B cell (primary cell): ENCODE measurements at regions of chr3 and their contacts with region 1.

Region 1: GRCh38 chr3:114056130-114057010 is at the starts of genes CCDC191 and QTRT2:
- DNase-seq: peak; percentile 99
- ATAC-seq: peak; percentile 95
- H3K4me3 ChIP-seq: peak within 1 kb of the TSS; percentile 71 to 100 (median 74)
- H3K4me3 Mint-ChIP-seq: peak within 1 kb of the TSS; percentile 95
- H3K27ac ChIP-seq: peak within 1 kb of the TSS; percentile 82 to 93
- H3K27ac Mint-ChIP-seq: peak within 1 kb of the TSS; percentile 96
- H3K4me1 ChIP-seq: peaks cover 36 to 46% of the 10 kb centered on the region in 2 donors
- H3K4me1 Mint-ChIP-seq: peaks cover 59% of the 10 kb centered on the region
- H3K27me3 ChIP-seq: no peaks in the 10 kb centered on the region
- H3K27me3 Mint-ChIP-seq: no peaks in the 10 kb centered on the region
- CTCF ChIP-seq: no peak
- total RNA-seq, gene CCDC191: 47.9 and 52.5 TPM in 2 replicates
- total RNA-seq, gene QTRT2: 59.5 and 61.8 TPM in 2 replicates

Region 2: GRCh38 chr3:113696658-113697499 is 359.5 kb before region 1 on chr3:
- CTCF ChIA-PET with region 1: no interaction called
- POLR2A ChIA-PET with region 1: no interaction called
- intact Hi-C with region 1: loop called (anchors 1 kb)
- DNase-seq: peak; percentile 100
- ATAC-seq: peak; percentile 87
- H3K4me3 ChIP-seq: peak overlapping the region; percentile 73 to 100 (median 90)
- H3K4me3 Mint-ChIP-seq: no peak overlapping the region
- H3K27ac ChIP-seq: peak overlapping the region; percentile 81 to 90
- H3K27ac Mint-ChIP-seq: no peak overlapping the region
- H3K4me1 ChIP-seq: peaks cover 39 to 40% of the 10 kb centered on the region in 2 donors
- H3K4me1 Mint-ChIP-seq: peaks cover 27% of the 10 kb centered on the region
- H3K27me3 ChIP-seq: no peaks in the 10 kb centered on the region
- H3K27me3 Mint-ChIP-seq: no peaks in the 10 kb centered on the region
- CTCF ChIP-seq: no peak

Region 3: GRCh38 chr3:113844622-113845222 is 211.6 kb before region 1 on chr3:
- CTCF ChIA-PET with region 1: interaction called, 10 read pairs
- POLR2A ChIA-PET with region 1: no interaction called
- intact Hi-C with region 1: no loop called
- DNase-seq: peak; percentile 53
- ATAC-seq: peak; percentile 36
- H3K4me3 ChIP-seq: no peak overlapping the region
- H3K4me3 Mint-ChIP-seq: no peak overlapping the region
- H3K27ac ChIP-seq: no peak overlapping the region
- H3K27ac Mint-ChIP-seq: no peak overlapping the region
- H3K4me1 ChIP-seq: peaks cover 0 to under 1% of the 10 kb centered on the region in 2 donors
- H3K4me1 Mint-ChIP-seq: peaks cover 12% of the 10 kb centered on the region
- H3K27me3 ChIP-seq: no peaks in the 10 kb centered on the region
- H3K27me3 Mint-ChIP-seq: no peaks in the 10 kb centered on the region
- CTCF ChIP-seq: peak; percentile 75

Region 4: DNA sequence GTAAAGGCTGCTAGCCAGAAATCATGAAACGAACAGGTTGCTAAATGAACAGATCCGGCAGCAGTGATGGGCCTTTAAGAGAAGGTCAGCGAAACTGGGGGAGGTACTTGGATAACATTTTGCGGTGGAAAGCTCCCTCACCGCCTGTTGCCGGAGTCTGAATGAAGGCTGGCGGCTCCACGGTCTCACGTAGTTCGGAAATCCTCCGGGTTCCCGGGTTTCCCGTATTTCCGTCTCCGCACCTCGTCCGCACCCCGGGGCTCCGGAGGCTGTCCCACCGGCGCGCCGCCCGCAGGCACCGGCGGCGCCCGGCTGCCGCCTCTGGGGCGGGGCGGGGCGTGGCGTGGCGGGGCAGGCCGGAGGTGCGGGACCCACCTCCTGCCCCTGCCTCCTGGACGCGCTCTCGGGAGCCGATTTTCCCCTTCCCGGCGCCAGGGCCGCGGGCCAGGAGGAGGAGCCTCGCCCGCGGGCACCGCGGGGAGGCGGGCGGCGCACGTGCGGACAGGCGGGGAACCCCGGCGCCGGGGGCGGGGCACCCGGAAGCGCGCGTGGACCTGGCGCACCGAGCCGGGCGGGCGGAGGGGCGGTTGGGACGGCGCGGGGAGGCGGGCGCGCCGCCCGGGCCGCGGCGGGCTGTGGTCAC is 108.9 kb before region 1 on chr3 and contains the start of gene ZDHHC23:
- CTCF ChIA-PET with region 1: no interaction called
- POLR2A ChIA-PET with region 1: no interaction called
- intact Hi-C with region 1: loop called (anchors 1 kb)
- DNase-seq: peak; percentile 88
- ATAC-seq: peak; percentile 84
- H3K4me3 ChIP-seq: peak within 1 kb of the TSS; percentile 47 to 89 (median 84)
- H3K4me3 Mint-ChIP-seq: peak within 1 kb of the TSS; percentile 87
- H3K27ac ChIP-seq: peak within 1 kb of the TSS; percentile 48 to 74
- H3K27ac Mint-ChIP-seq: peak within 1 kb of the TSS; percentile 89
- H3K4me1 ChIP-seq: peaks cover 12 to 14% of the 10 kb centered on the region in 2 donors
- H3K4me1 Mint-ChIP-seq: peaks cover 18% of the 10 kb centered on the region
- H3K27me3 ChIP-seq: no peaks in the 10 kb centered on the region
- H3K27me3 Mint-ChIP-seq: no peaks in the 10 kb centered on the region
- CTCF ChIP-seq: no peak
- total RNA-seq, gene ZDHHC23: 72.6 and 75.1 TPM in 2 replicates

Region 5: GRCh38 chr3:114005481-114005880 is 50.9 kb before region 1 on chr3:
- CTCF ChIA-PET with region 1: interaction called, 8 read pairs
- POLR2A ChIA-PET with region 1: interaction called, 10 read pairs
- intact Hi-C with region 1: loop called (anchors 1 kb)
- DNase-seq: peak; percentile 91
- ATAC-seq: peak; percentile 95
- H3K4me3 ChIP-seq: peak overlapping the region in 4 of 5 experiments; percentile 31 to 43 (median 38)
- H3K4me3 Mint-ChIP-seq: peak overlapping the region; percentile 80
- H3K27ac ChIP-seq: peak overlapping the region; percentile 93 to 94
- H3K27ac Mint-ChIP-seq: peak overlapping the region; percentile 98
- H3K4me1 ChIP-seq: peaks cover 34 to 45% of the 10 kb centered on the region in 2 donors
- H3K4me1 Mint-ChIP-seq: peaks cover 55% of the 10 kb centered on the region
- H3K27me3 ChIP-seq: no peaks in the 10 kb centered on the region
- H3K27me3 Mint-ChIP-seq: no peaks in the 10 kb centered on the region
- CTCF ChIP-seq: peak; percentile 38

Region 6: GRCh38 chr3:114067804-114068203 is 11.4 kb after region 1 on chr3:
- CTCF ChIA-PET with region 1: no interaction called
- POLR2A ChIA-PET with region 1: no interaction called
- intact Hi-C with region 1: no loop called
- DNase-seq: no peak
- ATAC-seq: no peak
- H3K4me3 ChIP-seq: no peak overlapping the region
- H3K4me3 Mint-ChIP-seq: no peak overlapping the region
- H3K27ac ChIP-seq: no peak overlapping the region
- H3K27ac Mint-ChIP-seq: no peak overlapping the region
- H3K4me1 ChIP-seq: no peaks in the 10 kb centered on the region
- H3K4me1 Mint-ChIP-seq: peaks cover 5% of the 10 kb centered on the region
- H3K27me3 ChIP-seq: no peaks in the 10 kb centered on the region
- H3K27me3 Mint-ChIP-seq: no peaks in the 10 kb centered on the region
- CTCF ChIP-seq: no peak

Region 7: DNA sequence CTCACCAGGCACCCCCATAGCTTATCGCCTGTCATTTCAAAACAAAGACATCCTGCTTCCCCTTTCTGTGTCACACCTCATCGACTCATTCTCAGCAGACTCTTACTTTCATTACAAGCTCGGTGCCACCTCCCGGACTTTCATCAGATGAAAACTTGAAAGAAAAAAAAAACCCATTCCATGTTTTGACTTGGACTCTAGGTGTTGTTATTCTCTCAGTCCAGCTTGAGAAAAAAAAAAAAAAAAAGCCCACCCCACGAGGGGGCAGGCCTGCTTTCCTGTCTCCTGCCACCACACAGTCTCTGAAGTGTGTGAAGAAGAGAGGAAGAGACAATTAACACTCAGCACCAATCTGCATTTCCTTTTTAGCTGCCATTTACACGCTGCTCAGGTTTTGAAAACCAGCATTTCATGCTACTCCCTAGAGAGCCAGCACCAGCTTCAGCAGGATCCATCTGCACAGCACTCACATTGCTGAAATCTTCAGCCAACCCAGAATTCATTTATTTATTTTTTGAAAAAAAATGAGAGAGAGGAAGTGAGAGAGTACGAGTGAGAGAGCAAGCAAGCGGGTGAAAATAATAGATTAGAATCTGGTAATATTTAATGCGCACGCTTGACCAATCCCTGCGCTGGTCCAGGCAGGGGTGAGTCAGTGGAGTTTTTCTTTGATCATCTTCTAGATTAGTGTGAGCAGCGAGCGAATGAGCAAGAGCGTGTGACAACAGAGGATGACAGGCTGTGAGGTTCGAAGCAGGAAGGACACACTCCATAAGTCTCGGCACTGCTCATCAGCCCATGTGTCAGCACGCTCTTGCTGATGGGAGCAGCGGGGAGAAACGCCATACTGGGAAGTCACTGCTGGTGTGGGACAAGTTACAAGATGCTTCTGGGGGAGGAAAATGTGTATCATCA is 157.5 kb after region 1 on chr3:
- CTCF ChIA-PET with region 1: no interaction called
- POLR2A ChIA-PET with region 1: no interaction called
- intact Hi-C with region 1: loop called (anchors 2 kb)
- DNase-seq: peak; percentile 92
- ATAC-seq: peak; percentile 76
- H3K4me3 ChIP-seq: peak overlapping the region; percentile 42 to 76 (median 69)
- H3K4me3 Mint-ChIP-seq: no peak overlapping the region
- H3K27ac ChIP-seq: peak overlapping the region; percentile 95 to 98
- H3K27ac Mint-ChIP-seq: no peak overlapping the region
- H3K4me1 ChIP-seq: peaks cover 66 to 71% of the 10 kb centered on the region in 2 donors
- H3K4me1 Mint-ChIP-seq: peaks cover 28% of the 10 kb centered on the region
- H3K27me3 ChIP-seq: no peaks in the 10 kb centered on the region
- H3K27me3 Mint-ChIP-seq: no peaks in the 10 kb centered on the region
- CTCF ChIP-seq: no peak